ENCODE measurements at regions of chr2 and their contacts with region 1.

Region 1: GRCh38 chr2:234181121-234181520 is 130.6 kb downstream of the SPP2 start:
- DNase-seq: no peak
- H3K4me3 ChIP-seq: no peak overlapping the region
- CTCF ChIP-seq: no peak

Region 2: GRCh38 chr2:234142530-234142929 is 38.6 kb before region 1 on chr2:
- in situ Hi-C with region 1: loop called (anchors 5 kb)
- DNase-seq: no peak
- H3K4me3 ChIP-seq: no peak overlapping the region
- CTCF ChIP-seq: no peak

Region 3: GRCh38 chr2:234218266-234219180 is 37.4 kb after region 1 on chr2:
- in situ Hi-C with region 1: no loop called
- DNase-seq: no peak
- H3K4me3 ChIP-seq: no peak overlapping the region
- CTCF ChIP-seq: no peak